ENCODE measurements at regions of chr4 and their contacts with region 1.

Region 1: GRCh38 chr4:82462415-82462831 is 32.0 kb downstream of the ENOPH1 start:
- DNase-seq: peak; percentile 83
- ATAC-seq: peak; percentile 86

Region 2: DNA sequence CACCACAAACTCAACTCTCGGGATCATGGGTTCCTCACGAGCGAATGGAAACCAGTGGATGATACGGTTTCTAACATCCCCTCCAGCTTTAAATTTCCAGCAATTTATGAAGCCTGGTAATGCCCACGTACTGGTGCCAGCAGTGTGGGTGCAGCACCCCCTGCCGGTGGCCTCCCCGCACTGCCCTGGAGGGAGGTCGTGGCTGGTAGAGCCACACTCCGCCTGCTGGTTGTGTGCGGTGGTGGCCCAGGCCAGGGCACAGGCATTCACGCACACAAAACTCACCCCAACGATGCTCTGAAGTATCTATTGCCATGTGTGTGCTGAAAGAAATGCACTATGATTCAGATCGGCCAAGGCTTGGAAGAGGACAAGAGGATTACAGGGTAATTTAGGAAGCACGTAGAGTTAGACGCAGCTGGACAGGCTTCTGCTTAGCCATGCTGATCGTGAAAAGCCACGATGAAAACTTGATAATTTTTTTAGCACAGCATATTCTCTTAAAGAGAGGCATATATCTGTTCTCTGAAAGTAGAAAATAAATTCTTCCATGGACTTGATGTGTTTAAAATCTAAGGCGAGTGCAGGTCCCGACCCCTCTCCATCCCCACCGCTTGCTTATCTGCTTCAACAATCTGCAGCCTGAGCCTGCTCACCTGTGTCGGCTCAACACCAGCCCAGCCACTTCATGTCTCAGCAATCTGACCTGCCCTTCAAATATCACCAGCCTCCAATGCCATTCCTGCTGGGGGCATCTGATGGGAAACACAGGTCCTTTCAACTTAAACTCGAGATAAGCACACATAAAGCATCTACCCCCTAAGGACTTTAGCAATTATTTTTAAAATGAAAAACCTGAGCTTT is 277.1 kb after region 1 on chr4:
- intact Hi-C with region 1: loop called (anchors 1 kb)
- DNase-seq: no peak
- ATAC-seq: peak; percentile 88

Region 3: DNA sequence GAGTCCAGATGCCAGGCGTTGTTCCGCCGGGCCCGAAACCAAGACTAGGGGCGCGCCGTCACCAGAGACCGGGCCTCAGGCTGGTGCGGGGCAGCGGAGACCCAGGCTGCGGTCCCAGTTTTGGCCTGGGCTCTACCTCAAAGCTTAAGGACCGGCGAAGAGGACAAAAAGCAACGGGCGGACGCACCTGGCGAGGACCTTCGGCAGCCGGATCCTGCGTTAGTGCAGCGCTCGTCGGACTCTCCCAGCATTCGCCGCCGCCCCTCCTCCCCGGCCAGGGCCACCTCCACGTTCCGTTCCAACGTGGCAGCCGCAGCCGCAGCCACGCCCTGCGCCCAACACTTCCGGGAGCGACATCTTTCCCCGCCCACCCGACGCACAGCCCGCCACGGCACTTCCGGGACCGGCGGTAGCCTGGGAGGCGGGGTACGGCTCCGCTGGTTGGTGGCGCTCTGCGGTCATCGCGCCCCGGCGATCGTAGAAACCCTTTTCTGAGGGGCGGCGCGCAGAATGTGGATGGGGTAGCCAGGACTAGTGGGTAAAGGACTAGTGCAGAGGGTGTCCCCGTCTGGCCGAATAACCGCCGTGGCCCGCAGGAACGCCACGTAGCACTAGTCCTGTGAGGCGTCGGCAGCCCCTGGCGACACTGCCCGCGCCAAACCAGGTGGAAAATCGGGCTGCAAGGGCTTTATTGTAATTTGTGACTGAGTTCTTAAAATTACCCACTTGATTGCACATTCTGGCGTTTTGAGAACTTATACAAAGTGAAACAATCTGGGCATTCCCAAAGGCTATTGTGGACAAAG is 428.7 kb after region 1 on chr4 and contains the start of gene SEC31A:
- intact Hi-C with region 1: loop called (anchors 10 kb)
- DNase-seq: peak; percentile 99
- ATAC-seq: peak; percentile 99
- total RNA-seq, gene SEC31A: 85.6 TPM

Region 4: DNA sequence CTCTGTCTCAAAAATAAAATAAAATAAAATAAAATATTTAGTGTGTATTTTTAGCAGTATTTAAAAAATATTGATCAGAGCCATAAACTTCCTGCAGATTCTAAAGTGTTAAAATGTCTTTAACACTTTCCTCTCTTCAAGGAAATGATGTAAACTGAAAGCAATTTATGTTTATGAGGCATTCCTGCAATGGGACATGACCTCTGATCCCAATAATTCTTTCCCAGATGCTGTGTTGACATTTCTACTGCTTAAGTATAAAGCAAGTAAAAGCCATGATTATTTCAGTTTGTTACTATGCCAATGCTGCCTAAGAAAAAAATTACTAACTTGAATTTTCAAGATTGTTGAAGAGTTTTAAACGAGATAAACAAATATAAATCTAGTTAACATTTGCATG is 793.2 kb after region 1 on chr4:
- intact Hi-C with region 1: loop called (anchors 1 kb)
- DNase-seq: no peak
- ATAC-seq: no peak